Activated B cell treated with CpG ODN at 0.5 μM for 24 hours (primary cell): ENCODE measurements at regions of chrX and their contacts with region 1.

Region 1: GRCh38 chrX:48891402-48892288 is 5.9 kb downstream of the TIMM17B start:
- DNase-seq: peak; percentile 67
- ATAC-seq: peak; percentile 88
- H3K4me3 Mint-ChIP-seq: peak overlapping the region; percentile 82
- H3K27ac Mint-ChIP-seq: peak overlapping the region; percentile 65
- H3K4me1 Mint-ChIP-seq: peaks cover 23% of the 10 kb centered on the region
- H3K27me3 Mint-ChIP-seq: no peaks in the 10 kb centered on the region
- CTCF ChIP-seq: no peak

Region 2: GRCh38 chrX:48648336-48648751 is 243.3 kb before region 1 on chrX:
- CTCF ChIA-PET with region 1: interaction called, 4 read pairs
- POLR2A ChIA-PET with region 1: interaction called, 5 read pairs
- intact Hi-C with region 1: loop called (anchors 5 kb)
- DNase-seq: no peak
- ATAC-seq: peak; percentile 65
- H3K4me3 Mint-ChIP-seq: no peak overlapping the region
- H3K27ac Mint-ChIP-seq: no peak overlapping the region
- H3K4me1 Mint-ChIP-seq: peaks cover 2% of the 10 kb centered on the region
- H3K27me3 Mint-ChIP-seq: no peaks in the 10 kb centered on the region
- CTCF ChIP-seq: no peak

Region 3: GRCh38 chrX:48911412-48912182 is 20.0 kb after region 1 on chrX and contains the start of gene SLC35A2:
- CTCF ChIA-PET with region 1: interaction called, 4 read pairs
- POLR2A ChIA-PET with region 1: interaction called, 55 read pairs
- intact Hi-C with region 1: loop called (anchors 2 kb)
- DNase-seq: peak; percentile 76
- ATAC-seq: peak; percentile 74
- H3K4me3 Mint-ChIP-seq: peak within 1 kb of the TSS; percentile 94
- H3K27ac Mint-ChIP-seq: peak within 1 kb of the TSS; percentile 94
- H3K4me1 Mint-ChIP-seq: peaks cover 55% of the 10 kb centered on the region
- H3K27me3 Mint-ChIP-seq: no peaks in the 10 kb centered on the region
- CTCF ChIP-seq: no peak
- total RNA-seq, gene SLC35A2: 17.3 and 18.4 TPM in 2 replicates

Region 4: DNA sequence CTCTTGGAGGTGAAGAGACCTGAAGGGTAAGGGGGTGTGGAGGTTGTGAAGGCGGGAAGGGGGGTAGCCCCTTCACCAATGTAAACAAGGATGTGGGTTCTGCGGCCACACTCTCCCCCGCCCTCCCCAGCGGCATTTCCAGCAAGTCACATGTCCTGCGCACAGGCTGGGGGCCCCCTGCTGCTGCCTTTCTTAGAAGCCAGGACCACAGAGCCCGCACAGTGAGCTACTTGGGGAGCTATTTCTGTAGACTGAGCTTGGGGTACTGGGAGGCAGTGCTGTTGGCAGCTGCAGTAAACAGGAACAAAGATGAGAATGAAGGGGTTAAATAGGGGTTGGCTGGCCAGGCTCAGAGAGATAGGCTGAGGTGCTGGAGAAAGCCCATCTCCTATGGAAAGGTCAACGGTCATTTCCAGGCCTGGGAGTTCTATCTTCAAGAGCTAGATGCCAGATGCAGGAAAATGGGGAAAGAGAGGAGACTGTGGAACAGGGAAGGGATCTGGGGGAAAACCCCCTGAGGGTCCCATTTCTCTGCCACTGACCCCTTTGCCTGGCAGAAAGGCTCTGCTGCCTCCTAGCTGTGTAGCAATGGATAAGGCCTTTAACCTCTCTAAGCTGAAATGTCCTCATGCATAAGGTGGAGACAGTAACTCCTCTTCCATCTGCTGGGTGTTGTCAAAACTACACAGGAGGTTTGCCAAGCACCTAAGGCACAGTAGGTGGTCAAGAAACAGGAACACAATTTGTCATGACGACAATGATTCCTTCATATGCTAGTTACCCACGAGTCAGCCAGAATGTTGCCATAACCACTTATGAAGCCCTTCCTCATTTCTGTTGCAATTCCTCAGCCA is 45.6 kb after region 1 on chrX:
- CTCF ChIA-PET with region 1: interaction called, 9 read pairs
- POLR2A ChIA-PET with region 1: interaction called, 65 read pairs
- intact Hi-C with region 1: loop called (anchors 1 kb)
- DNase-seq: peak; percentile 68
- ATAC-seq: peak; percentile 54
- H3K4me3 Mint-ChIP-seq: peak overlapping the region; percentile 77
- H3K27ac Mint-ChIP-seq: peak overlapping the region; percentile 98
- H3K4me1 Mint-ChIP-seq: peaks cover 87% of the 10 kb centered on the region
- H3K27me3 Mint-ChIP-seq: no peaks in the 10 kb centered on the region
- CTCF ChIP-seq: no peak

Region 5: GRCh38 chrX:48945516-48946348 is 54.1 kb after region 1 on chrX:
- CTCF ChIA-PET with region 1: interaction called, 17 read pairs
- POLR2A ChIA-PET with region 1: interaction called, 65 read pairs
- intact Hi-C with region 1: loop called (anchors 1 kb)
- DNase-seq: no peak
- ATAC-seq: peak; percentile 56
- H3K4me3 Mint-ChIP-seq: no peak overlapping the region
- H3K27ac Mint-ChIP-seq: peak overlapping the region; percentile 41
- H3K4me1 Mint-ChIP-seq: peaks cover 44% of the 10 kb centered on the region
- H3K27me3 Mint-ChIP-seq: no peaks in the 10 kb centered on the region
- CTCF ChIP-seq: no peak

Region 6: DNA sequence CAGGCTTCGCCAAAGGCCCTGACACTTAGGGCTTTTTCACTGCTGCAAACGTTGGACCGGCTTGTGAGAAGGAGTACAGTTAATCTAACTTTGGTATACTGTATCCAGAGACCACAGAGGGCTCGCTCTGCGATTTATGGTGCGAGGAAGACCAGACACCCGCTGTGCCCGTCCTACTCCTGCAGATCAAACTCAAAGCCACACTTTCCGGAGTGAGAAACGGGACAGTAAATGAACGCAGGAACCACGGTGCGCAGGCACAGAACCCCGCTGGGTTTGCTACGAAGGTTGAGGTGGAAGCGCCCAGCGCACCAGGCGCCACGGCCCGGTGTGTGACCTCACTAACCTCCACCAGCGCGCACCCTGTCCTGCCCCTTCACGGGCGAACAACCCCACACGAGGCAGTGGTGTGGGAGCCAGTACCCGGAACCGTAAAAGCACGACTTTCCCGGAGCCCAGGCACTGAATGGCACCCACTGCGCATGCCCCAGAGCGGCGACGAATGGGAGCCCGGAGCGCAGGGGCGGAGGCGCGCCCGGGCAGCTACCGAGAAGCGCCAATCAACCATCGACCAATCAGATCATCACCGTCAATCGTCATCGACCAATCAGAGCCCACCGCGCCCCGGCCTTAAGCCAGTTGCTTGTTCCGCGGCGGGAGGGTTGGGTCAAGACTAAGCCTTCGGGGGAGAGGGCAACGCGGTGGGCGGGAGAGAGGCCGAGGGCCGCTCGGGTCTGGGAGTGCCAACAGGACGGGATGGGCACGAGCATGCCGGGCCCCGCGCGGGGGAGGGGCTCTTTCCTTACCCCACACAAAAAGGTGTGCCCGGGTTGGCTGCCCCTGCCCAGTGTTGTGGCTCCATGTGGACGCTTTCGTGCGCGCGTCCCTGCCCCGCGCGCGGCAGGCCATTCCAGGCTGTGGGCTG is 209.3 kb after region 1 on chrX:
- CTCF ChIA-PET with region 1: no interaction called
- POLR2A ChIA-PET with region 1: no interaction called
- intact Hi-C with region 1: loop called (anchors 5 kb)
- DNase-seq: peak; percentile 78
- ATAC-seq: peak; percentile 92
- H3K4me3 Mint-ChIP-seq: peak overlapping the region; percentile 90
- H3K27ac Mint-ChIP-seq: peak overlapping the region; percentile 95
- H3K4me1 Mint-ChIP-seq: peaks cover 9% of the 10 kb centered on the region
- H3K27me3 Mint-ChIP-seq: no peaks in the 10 kb centered on the region
- CTCF ChIP-seq: no peak